ENCODE measurements at regions of chr17 and their contacts with region 1.

Region 1: GRCh38 chr17:38485146-38485468 is 56.8 kb downstream of the ARHGAP23 start:
- DNase-seq: no peak
- H3K4me3 ChIP-seq: no peak overlapping the region
- H3K27ac ChIP-seq: no peak overlapping the region
- H3K4me1 ChIP-seq: peaks cover 16% of the 10 kb centered on the region
- H3K27me3 ChIP-seq: no peaks in the 10 kb centered on the region
- CTCF ChIP-seq: no peak
- POLR2A ChIP-seq: no peak

Region 2: DNA sequence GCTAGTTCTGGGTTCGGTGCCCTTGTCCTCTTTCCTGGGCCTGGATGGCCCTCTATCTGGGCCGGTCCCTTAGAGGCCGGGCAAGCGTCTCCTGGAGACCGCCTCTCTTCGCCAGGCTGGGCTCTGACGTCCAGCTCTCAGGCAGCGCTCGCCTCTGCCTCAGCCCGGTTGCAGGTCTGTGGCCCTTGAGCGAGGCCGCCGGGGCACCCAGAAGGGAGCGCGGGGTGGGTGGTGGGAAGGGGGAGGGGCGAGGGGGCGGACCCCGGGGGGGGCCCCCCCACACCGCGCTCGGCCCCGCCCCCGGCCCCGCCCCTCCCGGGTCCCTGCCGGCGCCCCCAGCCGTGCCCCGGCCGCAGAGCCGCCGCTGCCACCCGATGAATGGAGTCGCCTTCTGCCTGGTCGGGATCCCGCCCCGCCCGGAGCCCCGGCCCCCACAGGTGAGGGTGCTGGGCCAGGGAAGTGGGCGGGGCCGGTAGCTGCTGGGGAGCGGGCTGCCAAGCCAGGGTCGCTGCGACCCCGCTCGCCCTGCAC is 56.9 kb before region 1 on chr17 and contains the start of gene ARHGAP23:
- intact Hi-C with region 1: loop called (anchors 10 kb)
- DNase-seq: no peak
- H3K4me3 ChIP-seq: peak within 1 kb of the TSS; percentile 77 to 97
- H3K27ac ChIP-seq: peak within 1 kb of the TSS; percentile 92
- H3K4me1 ChIP-seq: peaks cover 59% of the 10 kb centered on the region
- H3K27me3 ChIP-seq: no peaks in the 10 kb centered on the region
- CTCF ChIP-seq: no peak
- POLR2A ChIP-seq: no peak
- total RNA-seq, gene ARHGAP23: 70.2 TPM